GM10248 (cell line): ENCODE measurements at regions of chr1 and their contacts with region 1.

Region 1: GRCh38 chr1:115729756-115730155 is 38.8 kb downstream of the CASQ2 start:
- DNase-seq: peak; percentile 73
- CTCF ChIP-seq: no peak

Region 2: GRCh38 chr1:115717541-115717940 is 12.2 kb before region 1 on chr1:
- CTCF ChIA-PET with region 1: interaction called, 15 read pairs
- POLR2A ChIA-PET with region 1: no interaction called
- DNase-seq: peak; percentile 29
- CTCF ChIP-seq: peak; percentile 47